GM10248 (cell line): ENCODE measurements at regions of chr9 and their contacts with region 1.

Region 1: GRCh38 chr9:33024966-33025571 is at the start of gene DNAJA1:
- DNase-seq: peak; percentile 97
- CTCF ChIP-seq: no peak

Region 2: DNA sequence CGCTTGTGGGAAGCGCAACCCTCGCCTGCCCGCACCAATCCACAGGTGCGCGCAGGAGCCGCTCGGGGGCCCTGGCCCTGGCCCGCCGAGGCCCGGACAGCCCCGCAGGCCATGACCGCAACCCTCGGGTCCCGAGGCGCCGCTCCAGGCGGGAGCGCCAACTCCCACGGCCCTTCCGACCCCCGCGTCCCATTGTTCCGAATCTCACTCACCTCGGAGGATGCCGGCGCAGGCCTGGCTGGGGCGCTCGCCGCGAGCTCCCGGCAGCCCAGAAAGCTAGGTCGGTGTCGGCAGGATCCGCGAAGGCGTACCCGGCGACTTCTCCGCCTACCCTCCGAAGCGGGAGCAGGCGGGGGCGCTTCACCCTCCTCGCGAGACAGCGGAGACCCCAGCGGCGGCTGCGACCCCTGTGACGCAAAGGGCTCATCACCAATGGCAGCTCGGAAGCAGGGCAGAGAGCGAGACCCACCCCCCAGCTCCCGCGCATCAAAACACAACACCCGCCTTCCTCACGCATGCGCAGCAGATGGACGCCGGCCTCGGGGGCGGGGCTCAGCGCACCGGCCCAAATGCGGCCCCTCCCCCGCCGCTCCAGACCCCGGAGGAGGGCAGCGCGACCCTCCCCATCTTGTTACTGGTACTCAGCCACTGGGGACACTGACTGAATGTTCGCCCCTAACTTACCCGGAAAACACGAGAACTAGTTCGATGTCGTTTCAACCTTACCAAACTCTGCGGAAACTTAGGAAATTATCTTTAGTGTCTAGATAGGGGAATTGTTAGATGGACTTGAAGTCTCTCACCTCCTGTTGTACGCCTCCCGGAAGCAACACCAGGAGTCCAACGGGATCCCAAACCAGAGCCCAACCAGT is 474.3 kb before region 1 on chr9:
- CTCF ChIA-PET with region 1: no interaction called
- POLR2A ChIA-PET with region 1: interaction called, 14 read pairs
- DNase-seq: peak; percentile 98
- CTCF ChIP-seq: no peak

Region 3: DNA sequence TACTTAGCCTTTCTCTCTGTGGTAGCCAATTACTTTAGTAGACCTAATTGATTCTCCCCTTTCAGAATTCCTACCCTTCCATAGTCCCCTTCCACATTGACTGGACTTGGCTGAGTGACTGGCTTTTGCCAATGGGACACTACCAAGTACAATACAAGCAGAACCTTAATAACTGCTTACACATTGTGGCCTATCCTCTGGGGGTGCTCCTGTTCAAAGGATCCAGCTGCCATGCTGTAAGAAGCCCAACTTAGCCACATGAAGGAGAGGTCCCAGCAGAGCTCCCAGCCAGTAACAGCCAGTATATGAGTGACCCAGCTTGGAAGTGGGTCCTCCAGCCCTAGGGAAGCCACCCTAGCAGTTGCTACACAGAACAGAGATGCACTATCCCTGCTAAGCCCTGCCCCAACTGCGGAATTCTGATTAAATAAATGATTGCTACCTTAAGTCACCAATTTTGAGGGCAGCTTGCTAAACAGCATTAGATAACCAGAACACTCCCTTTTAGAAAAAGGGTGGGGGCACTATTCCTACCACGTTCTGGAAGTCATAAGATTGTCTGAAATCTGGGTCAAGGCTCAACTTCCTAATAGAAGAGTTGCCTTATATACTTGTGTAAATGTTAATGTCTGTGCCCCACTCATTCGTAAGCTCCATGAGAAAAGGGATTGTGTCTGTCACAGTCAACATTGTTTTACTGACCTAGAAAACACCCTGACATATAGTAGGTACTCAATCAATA is 12.6 kb before region 1 on chr9:
- CTCF ChIA-PET with region 1: interaction called, 3 read pairs
- POLR2A ChIA-PET with region 1: interaction called, 32 read pairs
- DNase-seq: no peak
- CTCF ChIP-seq: no peak

Region 4: DNA sequence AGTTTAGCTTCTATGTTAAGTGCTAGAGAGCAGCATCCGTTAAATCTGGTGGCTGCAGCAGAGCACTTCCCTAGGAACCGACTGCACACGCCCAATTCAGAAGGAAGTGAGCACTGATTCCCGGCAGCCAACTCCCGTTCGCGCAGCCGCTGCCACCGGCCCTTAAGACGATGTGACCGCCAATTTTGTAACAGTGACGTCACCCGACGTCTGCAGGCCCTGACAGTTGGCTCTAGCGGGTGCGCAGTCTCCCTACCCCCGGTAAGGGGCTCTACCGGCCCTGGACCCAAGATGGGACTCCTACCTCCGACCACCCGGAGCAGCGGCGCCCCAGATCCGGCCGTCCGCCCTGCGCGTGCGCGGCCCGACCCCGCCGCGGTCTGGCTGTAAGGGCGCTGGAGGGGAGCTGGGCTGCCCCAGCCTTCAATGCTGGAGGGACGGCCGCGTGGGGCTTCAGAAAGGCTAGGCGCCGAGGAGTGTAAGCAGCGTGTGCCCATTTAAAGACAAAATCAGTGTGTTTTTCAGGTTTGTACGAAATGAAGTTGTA is 19.1 kb after region 1 on chr9:
- CTCF ChIA-PET with region 1: interaction called, 5 read pairs
- POLR2A ChIA-PET with region 1: interaction called, 68 read pairs
- DNase-seq: peak; percentile 80
- CTCF ChIP-seq: no peak

Region 5: DNA sequence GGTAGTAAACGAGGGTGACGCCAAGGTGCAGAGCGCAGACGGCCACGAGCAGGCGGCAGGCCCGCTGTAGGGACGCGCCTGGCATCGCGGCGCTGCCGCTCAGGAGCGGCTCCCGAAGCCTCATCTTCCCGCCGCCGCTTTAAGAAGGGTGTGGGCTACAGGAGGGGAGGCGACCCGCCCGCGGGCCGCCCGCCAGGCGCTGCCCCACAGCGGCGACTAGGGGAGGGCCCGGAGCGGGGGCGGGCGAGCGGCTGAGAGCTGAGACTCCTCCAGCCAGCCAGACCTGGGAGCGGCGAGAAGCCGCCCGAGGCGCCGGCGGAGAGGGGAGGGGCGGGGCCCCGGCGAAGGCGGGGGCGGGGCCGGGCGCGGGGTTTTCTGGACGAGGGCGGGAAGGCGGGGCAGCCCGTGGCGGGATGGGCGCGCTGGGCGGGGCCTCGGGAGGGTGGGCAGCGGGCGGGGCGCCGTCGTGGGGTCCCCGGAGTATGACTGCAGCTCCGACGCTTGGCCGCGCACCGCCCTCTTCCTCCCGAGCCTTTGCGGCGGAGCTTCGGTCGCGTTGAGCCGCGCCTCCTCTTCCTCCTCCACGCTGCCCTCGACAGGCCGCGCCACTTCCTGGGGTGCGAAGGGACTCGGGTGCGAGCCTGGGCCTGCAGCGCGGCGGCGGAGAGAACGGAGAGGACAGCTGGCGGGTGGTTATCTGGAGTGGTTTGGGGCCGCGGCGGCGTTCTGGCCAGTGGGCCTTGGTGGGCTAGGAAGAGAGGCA is 142.2 kb after region 1 on chr9 and contains the start of gene B4GALT1:
- CTCF ChIA-PET with region 1: no interaction called
- POLR2A ChIA-PET with region 1: interaction called, 11 read pairs
- DNase-seq: peak; percentile 95
- CTCF ChIP-seq: no peak